PC-9 (cell line): ENCODE measurements at regions of chr13 and their contacts with region 1.

Region 1: GRCh38 chr13:20418953-20419352 is 106.7 kb downstream of the CRYL1 start:
- DNase-seq: no peak
- H3K4me3 ChIP-seq: no peak overlapping the region
- H3K27ac ChIP-seq: peak overlapping the region; percentile 93
- H3K4me1 ChIP-seq: peaks cover 30% of the 10 kb centered on the region
- H3K27me3 ChIP-seq: no peaks in the 10 kb centered on the region
- CTCF ChIP-seq: no peak

Region 2: GRCh38 chr13:20258208-20258962 is 160.6 kb before region 1 on chr13:
- CTCF ChIA-PET with region 1: no interaction called
- POLR2A ChIA-PET with region 1: no interaction called
- intact Hi-C with region 1: no loop called
- DNase-seq: no peak
- H3K4me3 ChIP-seq: no peak overlapping the region
- H3K27ac ChIP-seq: no peak overlapping the region
- H3K4me1 ChIP-seq: no peaks in the 10 kb centered on the region
- H3K27me3 ChIP-seq: no peaks in the 10 kb centered on the region
- CTCF ChIP-seq: no peak

Region 3: DNA sequence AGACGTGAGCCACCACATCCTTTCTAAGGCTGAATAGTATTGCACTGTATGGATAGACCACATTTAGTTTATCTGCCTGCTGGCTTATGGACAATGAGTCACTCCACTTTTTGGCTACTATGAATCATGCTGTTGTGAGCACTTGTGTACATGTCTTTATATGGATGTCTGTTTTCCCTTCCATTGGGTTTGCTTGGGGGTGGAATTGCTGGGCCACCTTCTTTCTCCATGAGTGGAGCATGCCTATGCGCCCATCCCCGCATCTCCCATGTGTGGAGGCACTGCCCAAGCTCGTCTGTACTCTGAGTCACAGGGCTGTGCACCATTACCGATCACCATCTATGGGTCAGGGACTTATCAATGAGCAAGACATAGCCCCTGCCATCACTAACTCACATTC is 59.6 kb before region 1 on chr13:
- CTCF ChIA-PET with region 1: no interaction called
- POLR2A ChIA-PET with region 1: no interaction called
- intact Hi-C with region 1: loop called (anchors 1 kb)
- DNase-seq: peak; percentile 40 to 95
- H3K4me3 ChIP-seq: no peak overlapping the region
- H3K27ac ChIP-seq: peak overlapping the region; percentile 39; the same call in 1 of the 2 replicates
- H3K4me1 ChIP-seq: peaks cover 31% of the 10 kb centered on the region
- H3K27me3 ChIP-seq: no peaks in the 10 kb centered on the region
- CTCF ChIP-seq: no peak